Activated T-helper 1 cell treated with anti-CD3 and anti-CD28 coated beads, Interleukin-12 subunit alpha, Interleukin-12 subunit beta, Interleukin-2, Interleukin-4 antibody, amounts not matched to agents 30 ng/mL and 10 ng/mL and 1 ng/mL, durations not matched to agents 14 hours and 24 hours and 36 hours (primary cell): ENCODE measurements at regions of chr7 and their contacts with region 1.

Region 1: DNA sequence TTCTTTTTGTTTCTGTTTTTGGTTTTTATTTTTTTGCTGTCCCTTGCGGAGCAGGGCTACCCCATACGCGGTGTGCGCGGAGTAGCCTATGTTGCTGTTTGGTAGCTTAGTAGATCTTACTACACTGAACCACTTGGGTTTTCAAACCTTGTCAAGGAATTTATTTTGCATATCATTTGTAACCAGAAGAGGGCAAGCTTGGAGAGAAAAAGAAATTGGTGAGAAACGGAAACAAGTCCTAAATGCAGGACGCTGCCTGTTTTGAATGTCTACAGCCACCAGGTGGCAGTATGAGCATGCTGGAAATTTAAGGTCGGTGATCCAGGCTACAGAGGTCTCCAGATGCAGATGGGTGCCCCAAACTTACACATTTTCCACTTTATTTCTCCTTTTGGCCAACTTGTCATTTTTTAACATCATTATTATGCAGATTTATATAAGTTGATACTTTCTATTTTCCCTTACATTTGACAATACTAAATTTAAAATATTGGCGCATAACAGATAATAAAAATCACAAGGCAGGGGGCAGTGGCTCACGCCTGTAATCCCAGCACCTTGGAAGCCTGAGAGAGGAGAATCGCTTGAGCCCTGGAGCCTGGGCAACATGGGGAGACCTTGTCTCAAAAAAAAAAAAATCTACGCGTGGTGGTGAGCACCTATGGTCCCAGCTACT is 15.3 kb upstream of the TRA2A start:
- DNase-seq: peak; percentile 63
- H3K4me3 Mint-ChIP-seq: no peak overlapping the region
- H3K27ac Mint-ChIP-seq: no peak overlapping the region
- H3K4me1 Mint-ChIP-seq: peaks cover 21% of the 10 kb centered on the region
- H3K27me3 Mint-ChIP-seq: peaks cover 2% of the 10 kb centered on the region

Region 2: GRCh38 chr7:22732556-22733126 is 814.4 kb before region 1 on chr7:
- intact Hi-C with region 1: no loop called
- DNase-seq: no peak
- H3K4me3 Mint-ChIP-seq: no peak overlapping the region
- H3K27ac Mint-ChIP-seq: no peak overlapping the region
- H3K4me1 Mint-ChIP-seq: peaks cover 24% of the 10 kb centered on the region
- H3K27me3 Mint-ChIP-seq: peaks cover 42% of the 10 kb centered on the region

Region 3: DNA sequence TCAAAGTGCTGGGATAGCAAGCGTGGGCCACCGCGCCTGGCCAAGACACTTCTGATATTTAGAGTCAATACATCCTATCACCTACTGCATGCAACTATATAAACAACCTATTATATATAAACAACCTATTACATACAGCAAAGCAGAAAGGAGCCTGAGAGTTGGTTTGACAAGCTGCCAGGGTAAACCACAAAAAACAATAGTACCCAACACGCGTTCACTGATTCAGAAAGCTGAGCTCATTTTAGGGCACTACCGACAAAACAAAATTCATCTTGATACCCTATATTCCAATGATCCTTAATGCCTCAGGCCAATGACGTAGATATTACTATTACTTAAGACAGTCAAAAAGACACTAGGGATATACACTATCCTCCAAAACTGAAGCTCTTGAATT is 231.7 kb before region 1 on chr7:
- intact Hi-C with region 1: no loop called
- DNase-seq: no peak
- H3K4me3 Mint-ChIP-seq: no peak overlapping the region
- H3K27ac Mint-ChIP-seq: no peak overlapping the region
- H3K4me1 Mint-ChIP-seq: no peaks in the 10 kb centered on the region
- H3K27me3 Mint-ChIP-seq: peaks cover 5% of the 10 kb centered on the region

Region 4: GRCh38 chr7:23431702-23432199 is 115.3 kb before region 1 on chr7:
- intact Hi-C with region 1: loop called (anchors 1 kb)
- DNase-seq: no peak
- H3K4me3 Mint-ChIP-seq: no peak overlapping the region
- H3K27ac Mint-ChIP-seq: no peak overlapping the region
- H3K4me1 Mint-ChIP-seq: peaks cover 4% of the 10 kb centered on the region
- H3K27me3 Mint-ChIP-seq: peaks cover 25% of the 10 kb centered on the region

Region 5: DNA sequence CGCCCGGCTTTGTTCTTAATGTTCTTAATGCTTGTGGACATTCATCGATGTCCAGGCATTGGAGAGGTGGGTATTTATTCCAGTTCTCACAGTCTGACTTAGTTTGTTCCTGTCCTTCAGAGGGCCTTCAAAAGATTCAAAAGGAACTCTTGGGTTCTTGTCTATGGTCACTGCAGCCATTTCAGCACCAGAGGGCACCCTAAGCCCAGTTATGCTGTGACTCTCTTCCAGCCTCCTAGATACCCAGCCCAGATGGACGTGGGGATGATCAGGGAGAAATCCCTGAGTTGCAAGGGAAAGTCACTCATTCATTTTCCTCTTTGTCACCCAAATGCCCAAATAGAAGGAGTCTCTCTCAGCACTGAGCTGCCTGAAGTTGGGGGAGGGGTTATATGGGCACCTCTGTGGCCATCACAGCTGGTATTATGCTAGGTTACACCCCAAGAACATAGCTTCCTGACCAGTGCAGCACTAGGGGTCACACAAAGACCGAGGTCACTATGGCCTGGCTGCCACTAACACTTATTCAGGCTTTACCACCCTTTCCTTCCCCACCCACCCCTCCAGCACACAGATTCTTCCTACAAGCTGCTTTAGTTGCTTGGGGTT is 23.7 kb after region 1 on chr7:
- intact Hi-C with region 1: loop called (anchors 1 kb)
- DNase-seq: peak; percentile 48
- H3K4me3 Mint-ChIP-seq: no peak overlapping the region
- H3K27ac Mint-ChIP-seq: no peak overlapping the region
- H3K4me1 Mint-ChIP-seq: peaks cover 5% of the 10 kb centered on the region
- H3K27me3 Mint-ChIP-seq: peaks cover 6% of the 10 kb centered on the region

Region 6: DNA sequence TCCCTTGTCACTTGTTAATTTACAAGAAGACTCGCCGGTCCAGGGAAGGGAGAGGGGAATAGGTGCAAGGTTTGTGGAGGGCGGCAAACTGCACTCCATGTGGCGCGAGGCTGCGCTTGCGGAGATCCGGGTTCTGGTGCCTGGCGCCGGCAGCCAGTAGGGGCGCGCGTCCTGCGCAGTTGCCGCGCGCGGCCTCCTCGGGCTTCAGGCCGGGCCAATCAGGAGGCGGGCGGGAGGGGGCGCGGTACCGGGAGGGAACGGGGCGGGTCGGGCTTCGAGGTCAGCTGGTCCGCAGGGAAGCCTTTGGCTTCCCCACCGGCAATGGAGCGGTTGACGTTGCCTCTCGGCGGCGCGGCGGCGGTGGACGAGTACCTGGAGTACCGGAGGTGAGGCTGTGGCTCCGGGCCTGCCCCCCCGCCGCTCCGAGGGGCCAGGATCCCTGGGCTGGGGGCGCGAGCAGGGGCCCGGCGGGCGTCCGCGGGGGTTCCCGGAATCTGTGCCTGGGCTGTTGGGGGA is 132.9 kb after region 1 on chr7 and contains the start of gene FAM221A:
- intact Hi-C with region 1: loop called (anchors 1 kb)
- DNase-seq: peak; percentile 70
- H3K4me3 Mint-ChIP-seq: peak within 1 kb of the TSS; percentile 88
- H3K27ac Mint-ChIP-seq: peak within 1 kb of the TSS; percentile 72
- H3K4me1 Mint-ChIP-seq: peaks cover 12% of the 10 kb centered on the region
- H3K27me3 Mint-ChIP-seq: peaks cover 18% of the 10 kb centered on the region
- total RNA-seq, gene FAM221A: 9.4 and 9.9 TPM in 2 replicates

Region 7: GRCh38 chr7:23712368-23713284 is 165.6 kb after region 1 on chr7:
- intact Hi-C with region 1: loop called (anchors 1 kb)
- DNase-seq: no peak
- H3K4me3 Mint-ChIP-seq: no peak overlapping the region
- H3K27ac Mint-ChIP-seq: no peak overlapping the region
- H3K4me1 Mint-ChIP-seq: no peaks in the 10 kb centered on the region
- H3K27me3 Mint-ChIP-seq: peaks cover 3% of the 10 kb centered on the region

Region 8: GRCh38 chr7:24572997-24573625 is 1026.1 kb after region 1 on chr7 and contains the start of gene PALS2:
- intact Hi-C with region 1: loop called (anchors 10 kb)
- DNase-seq: peak; percentile 77
- H3K4me3 Mint-ChIP-seq: peak within 1 kb of the TSS; percentile 94
- H3K27ac Mint-ChIP-seq: peak within 1 kb of the TSS; percentile 84
- H3K4me1 Mint-ChIP-seq: peaks cover 29% of the 10 kb centered on the region
- H3K27me3 Mint-ChIP-seq: peaks cover 41% of the 10 kb centered on the region
- total RNA-seq, gene PALS2: 34.9 and 42.2 TPM in 2 replicates